Aorta (tissue), 5 donors: ENCODE measurements at regions of chr3 and their contacts with region 1.

Region 1: GRCh38 chr3:142279965-142280590 is 54.7 kb upstream of the GK5 start:
- DNase-seq: no peak
- ATAC-seq: peak; percentile 80
- H3K4me3 ChIP-seq: no peak overlapping the region
- H3K27ac ChIP-seq: no peak overlapping the region
- H3K4me1 ChIP-seq: peaks cover 5% of the 10 kb centered on the region in 2 donors
- H3K27me3 ChIP-seq: no peaks in the 10 kb centered on the region

Region 2: DNA sequence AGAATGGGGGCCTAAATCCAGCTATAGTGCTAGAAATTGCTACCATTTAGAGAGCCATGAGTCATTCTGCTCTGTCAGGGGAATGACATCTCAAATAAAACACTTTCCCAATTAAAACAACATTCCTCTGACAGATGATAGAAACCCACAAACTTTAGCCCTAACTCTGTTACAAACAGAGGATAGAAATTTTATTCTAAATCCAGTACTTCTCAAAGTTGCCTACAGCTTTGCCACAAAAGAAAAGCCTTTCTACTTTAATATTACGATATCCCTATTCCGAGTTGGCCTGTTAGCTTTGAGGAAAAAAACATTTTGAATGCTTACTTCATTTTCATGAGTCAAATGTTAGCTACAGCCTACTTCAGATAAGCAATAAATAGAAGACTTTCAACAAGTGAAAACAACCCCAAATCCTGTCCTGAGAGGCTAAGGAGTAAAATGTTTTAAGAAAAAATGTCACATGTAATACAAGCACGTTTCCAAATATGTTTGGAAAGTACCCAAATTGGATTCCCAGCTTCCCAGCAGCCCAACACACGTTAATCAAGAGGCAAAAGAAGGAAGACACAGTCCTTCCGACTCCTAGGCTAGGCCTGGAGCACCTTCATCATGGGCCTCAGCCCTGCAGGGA is 320.0 kb before region 1 on chr3:
- intact Hi-C with region 1: loop called (anchors 5 to 10 kb)
- DNase-seq: no peak
- ATAC-seq: peak; percentile 58
- H3K4me3 ChIP-seq: no peak overlapping the region
- H3K27ac ChIP-seq: peak overlapping the region; percentile 59 to 94
- H3K4me1 ChIP-seq: peaks cover 0 to 2% of the 10 kb centered on the region in 2 donors
- H3K27me3 ChIP-seq: no peaks in the 10 kb centered on the region

Region 3: GRCh38 chr3:142129516-142130171 is 150.4 kb before region 1 on chr3:
- intact Hi-C with region 1: loop called (anchors 1 to 5 kb)
- DNase-seq: no peak
- ATAC-seq: no peak
- H3K4me3 ChIP-seq: no peak overlapping the region
- H3K27ac ChIP-seq: no peak overlapping the region
- H3K4me1 ChIP-seq: no peaks in the 10 kb centered on the region
- H3K27me3 ChIP-seq: no peaks in the 10 kb centered on the region

Region 4: DNA sequence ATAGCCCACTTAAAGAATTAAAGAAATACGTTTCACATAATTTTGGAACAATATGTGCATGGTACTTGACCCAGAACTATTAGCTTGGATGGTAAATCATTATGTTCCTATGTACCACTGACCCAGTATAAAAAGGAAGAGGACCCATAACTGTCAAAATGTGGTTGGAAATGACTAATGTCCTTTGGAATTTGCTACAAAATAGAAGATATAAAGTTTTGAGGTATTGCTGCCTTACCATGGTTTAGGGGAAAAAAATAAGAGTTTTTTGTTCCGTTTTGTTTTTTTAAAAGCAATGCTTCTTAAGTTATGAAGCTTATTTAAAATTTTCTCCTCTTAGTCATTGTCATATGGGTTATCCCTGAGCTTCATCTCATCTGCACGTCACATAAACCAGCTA is 114.9 kb before region 1 on chr3:
- intact Hi-C with region 1: no loop called
- DNase-seq: no peak
- ATAC-seq: no peak
- H3K4me3 ChIP-seq: no peak overlapping the region
- H3K27ac ChIP-seq: no peak overlapping the region
- H3K4me1 ChIP-seq: no peaks in the 10 kb centered on the region
- H3K27me3 ChIP-seq: no peaks in the 10 kb centered on the region

Region 5: DNA sequence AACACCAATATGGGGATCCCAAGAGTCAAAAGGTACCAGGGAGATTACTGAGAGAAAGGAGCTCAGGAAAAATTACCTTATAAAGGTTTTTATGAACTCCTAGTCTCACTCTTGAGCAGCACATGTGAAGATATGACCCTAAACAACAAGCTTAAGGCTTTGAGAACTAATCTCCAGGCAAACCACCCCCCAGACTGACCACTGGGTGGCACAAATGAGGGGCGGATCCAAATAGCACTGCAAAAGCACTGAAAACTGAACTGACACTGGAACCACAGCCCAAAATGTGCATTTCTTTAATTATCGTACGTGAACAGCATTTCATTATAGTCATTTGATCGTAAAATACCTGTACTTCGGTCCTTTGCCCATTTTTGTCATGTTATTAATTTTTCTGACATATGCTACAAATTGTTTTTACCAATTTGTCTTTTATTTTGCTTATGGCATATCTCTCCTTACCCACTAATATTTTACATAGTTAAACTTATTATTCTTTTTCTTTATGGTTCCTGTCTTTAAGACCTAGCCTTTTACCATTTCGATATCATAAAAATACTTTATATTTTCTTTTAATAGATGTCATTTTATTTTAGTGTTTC is 99.2 kb before region 1 on chr3:
- intact Hi-C with region 1: loop called (anchors 2 kb)
- DNase-seq: no peak
- ATAC-seq: no peak
- H3K4me3 ChIP-seq: no peak overlapping the region
- H3K27ac ChIP-seq: no peak overlapping the region
- H3K4me1 ChIP-seq: no peaks in the 10 kb centered on the region
- H3K27me3 ChIP-seq: no peaks in the 10 kb centered on the region

Region 6: DNA sequence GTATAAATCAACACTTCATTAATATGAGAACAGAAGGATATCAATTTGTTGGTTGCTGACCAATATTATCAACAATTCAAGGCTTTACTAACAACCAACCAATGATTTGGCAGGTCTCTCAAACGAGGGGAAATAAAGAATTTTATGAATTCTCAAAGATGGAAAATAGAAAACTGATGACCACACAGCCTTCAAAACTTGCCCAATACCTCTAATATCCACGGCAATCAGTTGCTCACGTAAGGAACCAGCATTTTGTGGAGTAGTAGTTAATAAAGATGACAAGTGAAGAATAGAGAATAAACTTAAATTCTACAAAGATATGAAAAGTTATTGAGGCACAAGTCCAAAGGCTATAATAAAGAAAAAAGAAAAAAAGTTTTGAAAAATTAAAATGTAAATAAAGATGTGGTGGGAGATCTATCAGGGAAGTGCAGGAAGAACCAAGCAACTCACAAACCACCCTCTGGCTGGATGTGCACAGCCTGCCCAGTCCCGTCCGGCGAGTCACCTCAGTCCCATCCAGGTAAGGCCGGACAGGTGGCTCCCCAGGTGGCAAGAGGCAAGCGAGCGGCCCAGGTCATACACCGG is 55.5 kb before region 1 on chr3:
- intact Hi-C with region 1: loop called in 1 of 2 experiments (anchors 2 kb)
- DNase-seq: no peak
- ATAC-seq: no peak
- H3K4me3 ChIP-seq: peak overlapping the region; percentile 64 to 69
- H3K27ac ChIP-seq: peak overlapping the region; percentile 1 to 62
- H3K4me1 ChIP-seq: no peaks in the 10 kb centered on the region
- H3K27me3 ChIP-seq: no peaks in the 10 kb centered on the region

Region 7: DNA sequence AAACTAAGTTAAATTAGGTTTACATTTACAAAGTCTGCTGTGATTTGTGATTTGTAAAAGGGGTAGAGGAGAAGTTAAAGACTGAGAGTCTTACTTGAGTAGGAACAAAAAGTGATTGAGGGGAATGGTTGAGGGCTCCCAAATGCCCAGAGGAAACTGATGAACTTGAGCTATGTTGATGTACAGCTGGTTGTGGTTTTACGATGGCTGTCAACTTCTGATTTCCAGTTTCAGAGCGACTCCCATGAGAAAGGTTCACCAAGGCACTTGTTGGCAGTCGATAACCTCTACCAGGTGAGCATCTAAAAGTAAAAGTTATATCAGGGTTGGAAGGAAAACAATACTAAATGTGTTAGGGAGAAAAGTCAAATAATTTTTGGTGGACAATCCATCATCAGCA is 76.7 kb after region 1 on chr3:
- intact Hi-C with region 1: no loop called
- DNase-seq: no peak
- ATAC-seq: no peak
- H3K4me3 ChIP-seq: no peak overlapping the region
- H3K27ac ChIP-seq: no peak overlapping the region
- H3K4me1 ChIP-seq: no peaks in the 10 kb centered on the region
- H3K27me3 ChIP-seq: no peaks in the 10 kb centered on the region